ENCODE measurements at regions of chr1 and their contacts with region 1.

Region 1: DNA sequence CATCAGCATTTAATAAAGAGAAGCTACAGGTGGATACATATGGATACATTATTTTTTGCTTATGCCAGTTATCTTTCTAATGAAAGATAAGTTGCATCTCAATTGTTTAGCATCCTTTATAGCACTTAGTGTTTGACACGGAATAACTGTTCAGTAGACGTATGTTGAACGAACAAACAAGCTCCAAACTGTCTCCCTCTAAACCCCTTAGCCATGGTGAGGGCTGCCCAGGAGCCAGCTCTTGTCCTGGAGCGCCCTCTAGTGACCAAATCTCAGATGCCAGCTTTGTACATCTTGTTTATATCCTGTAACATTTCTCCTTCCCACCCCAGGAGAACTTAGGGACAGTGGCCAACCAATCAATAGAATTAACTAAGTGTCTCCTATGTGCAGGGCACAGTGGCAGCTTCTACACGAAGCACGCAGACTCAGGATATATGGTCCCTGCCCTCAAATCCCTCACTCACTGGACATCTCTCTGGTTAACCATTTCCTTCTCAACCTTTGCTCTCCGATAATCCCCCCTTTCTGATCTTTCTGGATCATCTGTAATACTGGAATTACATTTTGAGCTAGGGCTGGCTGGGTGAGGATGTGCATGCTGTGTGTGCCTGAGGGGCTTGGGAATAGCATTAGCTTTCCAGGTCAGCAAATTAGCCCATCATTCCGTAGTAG is 22.9 kb downstream of the KCNA10 start:
- DNase-seq: peak; percentile 46
- H3K4me3 ChIP-seq: no peak overlapping the region
- H3K27ac ChIP-seq: no peak overlapping the region
- H3K4me1 ChIP-seq: no peaks in the 10 kb centered on the region
- H3K27me3 ChIP-seq: no peaks in the 10 kb centered on the region
- CTCF ChIP-seq: peak; percentile 94 to 95

Region 2: DNA sequence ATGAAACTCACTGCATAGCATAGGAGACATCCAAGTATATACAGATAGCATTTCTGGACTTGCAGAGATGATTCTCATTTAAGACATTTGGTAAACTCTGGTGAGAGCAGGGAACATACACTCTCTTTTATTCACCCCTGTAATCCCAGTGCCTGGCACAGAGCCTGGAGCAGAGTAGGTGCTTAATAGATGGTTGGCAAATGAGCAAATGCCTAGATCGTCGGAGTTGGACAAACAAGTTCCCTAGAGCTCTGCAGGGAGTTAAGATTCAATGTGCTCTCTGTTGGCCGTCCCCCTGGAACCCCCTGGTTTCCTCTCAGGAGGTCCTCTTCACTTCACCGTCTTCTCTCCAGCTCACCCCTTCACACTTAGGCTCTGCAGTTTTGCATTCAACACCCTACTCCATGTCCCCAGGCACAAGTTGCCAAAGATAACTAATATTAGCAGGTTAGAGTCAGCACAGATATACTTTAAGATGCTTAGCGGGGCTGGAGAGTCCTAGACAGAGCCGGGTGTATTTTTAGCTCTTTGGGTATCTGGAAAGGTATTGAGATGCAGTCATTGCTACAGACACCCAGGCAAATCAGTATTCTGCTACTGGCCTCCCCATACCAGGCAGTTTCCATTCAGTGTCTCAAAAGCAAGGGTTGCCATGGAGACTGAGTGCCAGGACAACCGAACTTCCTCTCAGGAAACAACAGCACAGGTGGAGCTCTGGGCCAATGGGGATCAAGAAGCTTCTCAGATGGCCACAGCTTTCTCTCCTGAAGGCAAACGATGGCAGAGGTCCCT is 240.9 kb before region 1 on chr1:
- CTCF ChIA-PET with region 1: interaction called, 13 read pairs
- dilution Hi-C with region 1: no loop called
- in situ Hi-C with region 1: no loop called
- intact Hi-C with region 1: no loop called
- DNase-seq: no peak
- H3K4me3 ChIP-seq: no peak overlapping the region
- H3K27ac ChIP-seq: no peak overlapping the region
- H3K4me1 ChIP-seq: peaks cover 15% of the 10 kb centered on the region
- H3K27me3 ChIP-seq: no peaks in the 10 kb centered on the region
- CTCF ChIP-seq: no peak

Region 3: GRCh38 chr1:110361856-110362255 is 134.2 kb before region 1 on chr1:
- CTCF ChIA-PET with region 1: interaction called, 17 read pairs
- dilution Hi-C with region 1: no loop called
- in situ Hi-C with region 1: no loop called
- intact Hi-C with region 1: no loop called
- DNase-seq: no peak
- H3K4me3 ChIP-seq: no peak overlapping the region
- H3K27ac ChIP-seq: no peak overlapping the region
- H3K4me1 ChIP-seq: no peaks in the 10 kb centered on the region
- H3K27me3 ChIP-seq: no peaks in the 10 kb centered on the region
- CTCF ChIP-seq: no peak

Region 4: GRCh38 chr1:110420874-110421793 is 74.9 kb before region 1 on chr1:
- CTCF ChIA-PET with region 1: no interaction called
- dilution Hi-C with region 1: loop called (anchors 5 kb)
- in situ Hi-C with region 1: no loop called
- intact Hi-C with region 1: no loop called
- DNase-seq: peak; percentile 64
- H3K4me3 ChIP-seq: no peak overlapping the region
- H3K27ac ChIP-seq: no peak overlapping the region
- H3K4me1 ChIP-seq: no peaks in the 10 kb centered on the region
- H3K27me3 ChIP-seq: no peaks in the 10 kb centered on the region
- CTCF ChIP-seq: no peak

Region 5: GRCh38 chr1:110466646-110467280 is 29.3 kb before region 1 on chr1:
- CTCF ChIA-PET with region 1: no interaction called
- dilution Hi-C with region 1: no loop called
- in situ Hi-C with region 1: no loop called
- intact Hi-C with region 1: loop called (anchors 1 kb)
- DNase-seq: no peak
- H3K4me3 ChIP-seq: no peak overlapping the region
- H3K27ac ChIP-seq: no peak overlapping the region
- H3K4me1 ChIP-seq: peaks cover 22% of the 10 kb centered on the region
- H3K27me3 ChIP-seq: no peaks in the 10 kb centered on the region
- CTCF ChIP-seq: no peak

Measured in mammary epithelial cell (primary cell).